BJ (cell line): ENCODE measurements at regions of chr16 and their contacts with region 1.

Region 1: GRCh38 chr16:21656795-21657768 is 4.7 kb upstream of the IGSF6 start:
- DNase-seq: no peak
- H3K4me3 ChIP-seq: no peak overlapping the region
- H3K27me3 ChIP-seq: no peaks in the 10 kb centered on the region
- CTCF ChIP-seq: peak; percentile 81

Region 2: DNA sequence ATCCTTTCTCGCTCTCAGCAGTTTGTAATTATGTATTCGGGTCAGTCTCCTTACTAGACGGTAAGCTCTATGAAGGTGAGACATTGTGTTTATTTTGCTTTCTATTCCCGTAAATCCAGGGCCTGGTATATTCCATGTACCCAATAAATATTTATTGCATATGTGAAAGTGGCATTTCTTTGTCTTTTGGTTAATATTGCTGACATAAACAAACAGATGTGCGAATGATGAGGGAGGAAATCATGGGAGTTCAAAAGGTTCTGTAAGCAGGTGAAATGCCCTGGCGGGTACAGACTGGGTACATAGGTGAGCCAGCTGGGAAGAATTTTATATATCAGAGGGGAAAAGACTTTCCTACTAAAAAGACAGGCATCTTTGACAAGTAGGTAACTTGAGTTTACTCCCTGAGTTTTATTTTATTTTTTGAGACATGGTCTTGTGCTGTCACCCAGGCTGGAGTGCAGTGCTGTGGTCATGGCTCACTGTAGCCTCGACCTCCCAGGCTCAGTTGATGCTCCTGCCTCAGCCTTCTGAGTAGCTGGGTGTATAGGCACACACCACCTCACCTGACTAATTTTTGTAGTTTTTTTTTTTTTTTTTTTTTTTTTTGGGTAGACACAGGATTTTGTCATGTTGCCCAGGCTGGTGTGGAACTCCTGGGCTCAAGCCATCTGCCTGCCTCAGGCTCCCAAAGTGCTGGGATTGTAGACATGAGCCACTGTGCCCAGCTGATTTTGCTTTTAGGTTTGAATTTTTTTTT is 63.4 kb before region 1 on chr16:
- CTCF ChIA-PET with region 1: interaction called, 11 read pairs
- POLR2A ChIA-PET with region 1: no interaction called
- DNase-seq: no peak
- H3K4me3 ChIP-seq: no peak overlapping the region
- H3K27me3 ChIP-seq: no peaks in the 10 kb centered on the region
- CTCF ChIP-seq: no peak

Region 3: GRCh38 chr16:21628121-21628726 is 28.9 kb before region 1 on chr16:
- CTCF ChIA-PET with region 1: no interaction called
- POLR2A ChIA-PET with region 1: no interaction called
- DNase-seq: no peak
- H3K4me3 ChIP-seq: no peak overlapping the region
- H3K27me3 ChIP-seq: no peaks in the 10 kb centered on the region
- CTCF ChIP-seq: no peak

Region 4: GRCh38 chr16:21646721-21647561 is 10.1 kb before region 1 on chr16:
- CTCF ChIA-PET with region 1: interaction called, 18 read pairs
- POLR2A ChIA-PET with region 1: no interaction called
- DNase-seq: no peak
- H3K4me3 ChIP-seq: no peak overlapping the region
- H3K27me3 ChIP-seq: no peaks in the 10 kb centered on the region
- CTCF ChIP-seq: no peak

Region 5: DNA sequence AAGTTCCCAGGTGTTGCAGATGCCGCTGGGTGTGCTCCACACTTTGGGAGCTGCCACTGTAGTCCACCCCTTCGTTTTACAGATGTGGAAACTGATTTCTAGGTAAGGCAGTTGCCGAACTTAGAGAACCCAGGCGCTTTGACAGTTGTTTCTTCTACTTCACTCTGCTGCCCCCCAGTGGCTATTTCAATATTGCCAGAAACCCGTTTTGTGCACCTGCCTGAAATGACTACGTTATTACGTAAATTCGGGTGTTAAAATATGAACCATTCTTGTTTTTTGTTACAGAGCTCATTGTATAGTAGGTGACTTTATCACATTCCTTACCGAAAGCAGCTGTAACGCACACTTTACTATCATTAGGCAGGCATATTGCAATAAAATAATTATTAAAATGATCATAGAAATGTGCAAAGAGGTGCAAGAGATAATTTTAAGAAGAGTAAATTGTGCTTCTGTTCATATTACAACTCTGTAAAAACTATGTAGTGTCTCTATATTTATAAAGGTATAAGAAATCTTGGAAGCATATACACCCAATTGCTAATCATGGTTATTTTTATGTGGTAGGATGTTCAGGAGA is 51.5 kb after region 1 on chr16:
- CTCF ChIA-PET with region 1: interaction called, 68 read pairs
- POLR2A ChIA-PET with region 1: no interaction called
- DNase-seq: peak; percentile 13
- H3K4me3 ChIP-seq: no peak overlapping the region
- H3K27me3 ChIP-seq: peaks cover 5% of the 10 kb centered on the region
- CTCF ChIP-seq: peak; percentile 85

Region 6: GRCh38 chr16:22297114-22297878 is 640.2 kb after region 1 on chr16 and contains the start of gene POLR3E:
- CTCF ChIA-PET with region 1: no interaction called
- POLR2A ChIA-PET with region 1: no interaction called
- DNase-seq: peak; percentile 82
- H3K4me3 ChIP-seq: peak within 1 kb of the TSS; percentile 97
- H3K27me3 ChIP-seq: no peaks in the 10 kb centered on the region
- CTCF ChIP-seq: peak; percentile 89
- polyA plus RNA-seq, gene POLR3E: 36.6 and 60.9 TPM in 2 replicates